ENCODE measurements at regions of chr6 and their contacts with region 1.

Region 1: DNA sequence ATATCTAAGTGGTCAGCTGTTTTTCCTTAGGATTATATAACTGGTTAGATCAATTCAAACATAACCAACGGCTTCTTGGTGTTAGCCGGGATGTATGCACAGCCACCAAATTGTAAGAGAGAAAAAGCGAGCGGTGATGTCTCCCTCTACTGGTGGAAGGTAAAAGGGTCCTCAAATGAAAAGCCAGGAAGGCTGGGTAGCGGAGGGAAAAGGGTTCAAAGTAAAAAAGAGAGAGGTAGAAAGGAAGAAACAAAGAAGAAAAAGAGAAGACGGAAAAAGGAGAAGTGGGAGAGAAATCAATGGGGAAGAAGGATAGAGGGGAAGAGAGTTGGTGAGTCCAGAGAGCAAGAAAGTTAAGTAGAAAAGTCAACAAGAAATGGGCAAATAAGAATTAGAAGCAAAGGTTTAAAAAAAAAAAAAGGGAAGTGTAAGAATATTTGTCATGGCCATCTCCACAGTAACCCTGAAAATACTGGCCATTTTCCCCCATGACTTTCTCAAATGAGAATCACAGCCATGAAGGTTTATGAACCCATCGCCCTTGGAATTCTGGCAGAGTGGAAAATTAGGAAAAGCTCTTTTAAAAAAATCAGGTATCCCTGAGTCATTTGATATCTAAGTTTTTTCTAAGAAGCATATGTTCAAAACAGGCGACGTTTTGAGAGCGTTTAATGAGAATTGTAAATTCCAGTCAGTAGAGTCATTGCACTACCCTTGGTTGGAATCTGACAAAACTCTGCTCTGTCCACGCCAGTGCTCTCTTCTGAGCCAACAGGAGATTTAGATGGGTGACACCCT is 155.6 kb upstream of the SNX9 start:
- DNase-seq: peak; percentile 78
- H3K4me3 Mint-ChIP-seq: peak overlapping the region; percentile 28
- H3K27ac Mint-ChIP-seq: no peak overlapping the region
- H3K4me1 Mint-ChIP-seq: peaks cover 31% of the 10 kb centered on the region
- H3K27me3 Mint-ChIP-seq: peaks cover 4% of the 10 kb centered on the region

Region 2: GRCh38 chr6:157314705-157315321 is 352.6 kb before region 1 on chr6:
- CTCF ChIA-PET with region 1: interaction called, 42 read pairs
- intact Hi-C with region 1: loop called (anchors 1 kb)
- DNase-seq: peak; percentile 30
- H3K4me3 Mint-ChIP-seq: no peak overlapping the region
- H3K27ac Mint-ChIP-seq: no peak overlapping the region
- H3K4me1 Mint-ChIP-seq: peaks cover 12% of the 10 kb centered on the region
- H3K27me3 Mint-ChIP-seq: no peaks in the 10 kb centered on the region

Region 3: DNA sequence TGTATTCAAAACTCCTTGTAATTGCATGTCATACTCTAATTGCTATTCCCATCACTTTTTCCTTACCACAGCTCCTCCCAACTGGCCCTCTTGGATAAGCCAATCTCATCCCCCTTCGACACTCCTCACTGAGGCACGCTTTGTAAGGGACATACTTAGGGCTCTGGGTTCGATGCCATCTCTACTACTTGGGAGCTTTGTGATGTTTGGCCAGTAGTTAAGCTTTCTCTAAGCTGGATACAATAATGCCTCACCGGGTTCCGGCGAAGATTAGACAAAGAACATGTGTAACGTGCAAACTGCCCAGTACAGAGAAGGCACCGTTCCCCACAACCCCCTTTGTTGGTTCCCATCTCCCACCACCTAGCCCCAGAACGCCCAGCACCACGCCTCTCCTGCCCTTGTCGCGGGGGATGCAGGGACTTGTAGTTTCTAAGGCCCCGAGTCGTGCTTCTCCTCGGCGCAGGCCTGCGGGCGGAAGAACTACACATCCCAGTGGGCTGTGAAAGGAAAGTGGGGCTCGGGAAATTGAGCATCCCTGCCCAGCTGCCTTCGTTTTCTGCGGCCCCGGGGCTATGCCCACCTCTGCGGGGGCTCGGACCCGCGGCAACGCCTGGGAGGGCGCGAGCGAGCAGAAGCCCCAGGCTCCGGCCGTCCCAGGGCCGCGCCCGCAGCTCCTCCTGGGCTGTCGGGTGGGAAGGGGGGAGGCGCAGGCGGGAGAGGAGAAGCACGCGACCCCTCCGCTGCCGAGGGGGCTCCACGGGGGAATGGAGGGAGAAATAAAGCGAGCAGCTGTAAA is 287.6 kb before region 1 on chr6:
- CTCF ChIA-PET with region 1: interaction called, 3 read pairs
- intact Hi-C with region 1: loop called (anchors 5 kb)
- DNase-seq: peak; percentile 92
- H3K4me3 Mint-ChIP-seq: peak overlapping the region; percentile 81
- H3K27ac Mint-ChIP-seq: peak overlapping the region; percentile 59
- H3K4me1 Mint-ChIP-seq: peaks cover 36% of the 10 kb centered on the region
- H3K27me3 Mint-ChIP-seq: peaks cover 12% of the 10 kb centered on the region

Region 4: GRCh38 chr6:157461000-157461915 is 206.2 kb before region 1 on chr6:
- CTCF ChIA-PET with region 1: no interaction called
- intact Hi-C with region 1: loop called (anchors 2 kb)
- DNase-seq: peak; percentile 91
- H3K4me3 Mint-ChIP-seq: no peak overlapping the region
- H3K27ac Mint-ChIP-seq: peak overlapping the region; percentile 65
- H3K4me1 Mint-ChIP-seq: peaks cover 36% of the 10 kb centered on the region
- H3K27me3 Mint-ChIP-seq: no peaks in the 10 kb centered on the region

Region 5: GRCh38 chr6:157644043-157644810 is 23.2 kb before region 1 on chr6:
- CTCF ChIA-PET with region 1: interaction called, 6 read pairs
- intact Hi-C with region 1: loop called (anchors 2 kb)
- DNase-seq: peak; percentile 71
- H3K4me3 Mint-ChIP-seq: no peak overlapping the region
- H3K27ac Mint-ChIP-seq: no peak overlapping the region
- H3K4me1 Mint-ChIP-seq: peaks cover 14% of the 10 kb centered on the region
- H3K27me3 Mint-ChIP-seq: no peaks in the 10 kb centered on the region

Region 6: DNA sequence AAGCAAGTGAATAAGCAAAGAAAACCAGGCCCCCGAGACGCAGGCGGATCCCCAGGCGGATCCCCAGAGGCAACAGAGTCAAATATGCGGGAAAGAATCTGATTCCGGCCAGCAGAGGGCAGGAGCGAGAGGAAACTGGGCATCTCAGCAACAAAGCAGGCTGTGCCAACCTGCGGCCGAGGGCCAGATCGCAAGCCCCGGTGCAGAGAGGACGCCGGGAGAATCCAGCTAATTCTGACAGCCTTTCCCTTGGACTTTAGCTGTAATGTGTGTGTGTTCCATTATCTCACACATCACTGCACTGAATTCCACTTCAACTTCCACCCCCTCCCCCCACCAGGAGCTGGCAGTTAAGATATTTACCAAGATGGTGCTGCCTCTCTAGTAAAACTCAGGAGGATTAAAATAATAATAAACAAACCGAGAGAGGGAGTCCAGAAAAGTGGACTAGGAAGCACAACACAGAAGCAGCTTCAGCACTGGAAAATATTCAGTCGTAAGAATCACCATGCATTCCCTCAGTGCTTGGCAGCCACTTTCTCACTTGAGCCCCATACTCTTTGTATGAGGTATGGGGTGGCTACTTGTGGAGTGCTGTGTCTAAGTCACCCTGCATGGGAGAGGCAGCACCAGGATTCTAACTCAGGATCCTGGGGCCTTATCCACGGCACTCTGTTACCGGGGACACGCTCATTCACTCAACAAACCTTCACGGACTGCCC is 89.5 kb after region 1 on chr6:
- CTCF ChIA-PET with region 1: interaction called, 14 read pairs
- intact Hi-C with region 1: loop called (anchors 2 kb)
- DNase-seq: peak; percentile 94
- H3K4me3 Mint-ChIP-seq: peak overlapping the region; percentile 28
- H3K27ac Mint-ChIP-seq: peak overlapping the region; percentile 89
- H3K4me1 Mint-ChIP-seq: peaks cover 93% of the 10 kb centered on the region
- H3K27me3 Mint-ChIP-seq: no peaks in the 10 kb centered on the region

Region 7: GRCh38 chr6:157946865-157947532 is 279.6 kb after region 1 on chr6:
- CTCF ChIA-PET with region 1: interaction called, 4 read pairs
- intact Hi-C with region 1: loop called (anchors 1 kb)
- DNase-seq: peak; percentile 57
- H3K4me3 Mint-ChIP-seq: no peak overlapping the region
- H3K27ac Mint-ChIP-seq: no peak overlapping the region
- H3K4me1 Mint-ChIP-seq: peaks cover 30% of the 10 kb centered on the region
- H3K27me3 Mint-ChIP-seq: no peaks in the 10 kb centered on the region

Measured in activated naive CD4-positive, alpha-beta T cell treated with anti-CD3 and anti-CD28 coated beads for 36 hours (primary cell).